PC-9 (cell line): ENCODE measurements at regions of chr5 and their contacts with region 1.

Region 1: DNA sequence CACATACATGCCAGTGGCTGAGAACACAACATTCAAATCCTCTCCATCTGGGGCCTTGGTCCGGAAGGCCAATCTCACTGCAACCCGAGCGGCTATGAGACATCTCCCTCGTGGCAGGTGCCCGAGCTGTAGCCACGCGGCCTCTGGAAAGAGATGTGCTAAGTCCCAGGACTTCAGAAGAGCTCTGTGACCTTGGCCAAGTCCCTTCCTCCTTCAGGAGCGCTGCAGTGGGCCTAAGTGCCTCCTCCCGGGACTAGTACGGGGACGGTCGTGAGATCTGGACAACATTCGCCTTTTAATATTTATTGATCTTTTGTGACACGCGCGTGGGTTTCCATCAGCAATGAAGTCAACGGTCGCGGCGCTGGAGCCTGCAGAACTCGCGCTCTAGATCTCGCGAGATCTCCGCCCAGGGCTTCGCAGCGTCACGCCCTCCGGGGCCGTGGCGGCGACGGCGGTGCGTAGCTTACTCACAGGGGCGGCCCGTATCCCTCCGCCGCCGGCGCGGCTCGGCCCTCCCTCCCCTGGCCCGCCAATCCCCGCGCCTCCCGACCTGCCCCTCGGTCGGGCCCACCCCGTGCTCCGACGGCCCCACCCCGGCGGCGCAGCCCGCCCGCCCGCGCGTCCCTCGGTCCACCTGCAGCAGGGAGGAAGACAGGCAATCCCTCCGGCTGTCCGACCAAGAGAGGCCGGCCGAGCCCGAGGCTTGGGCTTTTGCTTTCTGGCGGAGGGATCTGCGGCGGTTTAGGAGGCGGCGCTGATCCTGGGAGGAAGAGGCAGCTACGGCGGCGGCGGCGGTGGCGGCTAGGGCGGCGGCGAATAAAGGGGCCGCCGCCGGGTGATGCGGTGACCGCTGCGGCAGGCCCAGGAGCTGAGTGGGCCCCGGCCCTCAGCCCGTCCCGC is at the start of gene UBE2D2:
- DNase-seq: peak; percentile 88 to 96
- H3K4me3 ChIP-seq: peak within 1 kb of the TSS; percentile 99
- H3K27ac ChIP-seq: peak within 1 kb of the TSS; percentile 88
- H3K4me1 ChIP-seq: peaks cover 35% of the 10 kb centered on the region
- H3K27me3 ChIP-seq: no peaks in the 10 kb centered on the region
- CTCF ChIP-seq: no peak
- total RNA-seq, gene UBE2D2: 86.2 and 115 TPM in 2 replicates

Region 2: DNA sequence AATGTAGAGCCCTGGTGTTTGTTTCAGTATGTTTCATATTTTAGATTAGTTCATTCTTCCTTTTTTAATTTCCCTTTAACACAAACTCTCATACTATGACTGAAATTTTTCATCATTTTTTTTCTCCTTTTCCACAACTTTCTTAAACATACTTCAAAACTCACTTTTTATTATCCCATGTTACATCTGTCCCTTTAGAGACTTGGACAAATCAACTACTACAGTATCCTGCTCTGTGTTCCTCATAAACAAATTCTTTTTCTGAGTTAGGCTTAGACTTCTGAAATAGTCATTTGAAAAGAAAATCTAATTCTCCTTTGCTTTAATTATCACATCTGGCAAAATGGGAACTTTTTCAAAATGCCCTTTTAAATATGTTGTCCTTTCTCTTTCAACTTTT is 252.2 kb before region 1 on chr5:
- CTCF ChIA-PET with region 1: no interaction called
- POLR2A ChIA-PET with region 1: interaction called, 11 read pairs
- intact Hi-C with region 1: no loop called
- DNase-seq: no peak
- H3K4me3 ChIP-seq: no peak overlapping the region
- H3K27ac ChIP-seq: peak overlapping the region; percentile 67; the same call in 1 of the 2 replicates
- H3K4me1 ChIP-seq: peaks cover 48% of the 10 kb centered on the region
- H3K27me3 ChIP-seq: no peaks in the 10 kb centered on the region
- CTCF ChIP-seq: no peak

Region 3: GRCh38 chr5:139368613-139369012 is 192.4 kb before region 1 on chr5:
- CTCF ChIA-PET with region 1: interaction called, 16 read pairs
- POLR2A ChIA-PET with region 1: no interaction called
- intact Hi-C with region 1: no loop called
- DNase-seq: no peak
- H3K4me3 ChIP-seq: no peak overlapping the region
- H3K27ac ChIP-seq: no peak overlapping the region
- H3K4me1 ChIP-seq: peaks cover 20% of the 10 kb centered on the region
- H3K27me3 ChIP-seq: no peaks in the 10 kb centered on the region
- CTCF ChIP-seq: peak; percentile 23; the same call in 1 of the 2 replicates

Region 4: GRCh38 chr5:139492700-139493192 is 68.3 kb before region 1 on chr5:
- CTCF ChIA-PET with region 1: no interaction called
- POLR2A ChIA-PET with region 1: interaction called, 18 read pairs
- intact Hi-C with region 1: no loop called
- DNase-seq: peak in 1 of 2 experiments; percentile 51
- H3K4me3 ChIP-seq: no peak overlapping the region
- H3K27ac ChIP-seq: no peak overlapping the region
- H3K4me1 ChIP-seq: peaks cover 37% of the 10 kb centered on the region
- H3K27me3 ChIP-seq: no peaks in the 10 kb centered on the region
- CTCF ChIP-seq: no peak